Panc1 (cell line): ENCODE measurements at regions of chr12 and their contacts with region 1.

Region 1: DNA sequence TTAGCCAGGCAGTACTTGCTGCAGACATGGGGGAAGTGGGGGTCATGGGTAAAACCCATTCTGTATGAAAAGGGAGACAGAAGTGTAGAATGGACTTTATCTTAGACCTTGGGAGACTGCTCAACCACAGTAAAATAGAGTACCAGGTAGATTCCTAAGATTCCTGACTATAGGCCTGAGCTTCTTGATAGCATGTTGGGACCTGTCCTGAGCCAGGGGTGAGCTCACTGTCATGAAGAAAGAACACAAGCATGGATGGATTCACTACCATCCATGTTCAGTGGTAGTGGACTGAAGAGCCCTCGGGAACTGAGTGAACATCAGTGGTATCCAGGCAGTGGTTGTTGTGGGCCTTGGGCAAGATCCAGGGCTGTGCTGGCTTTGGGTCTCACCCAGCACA is 1003.8 kb downstream of the TMTC2 start:
- DNase-seq: no peak
- ATAC-seq: no peak
- H3K4me3 ChIP-seq: no peak overlapping the region
- H3K27ac ChIP-seq: no peak overlapping the region
- H3K4me1 ChIP-seq: no peaks in the 10 kb centered on the region
- H3K27me3 ChIP-seq: no peaks in the 10 kb centered on the region
- CTCF ChIP-seq: no peak

Region 2: GRCh38 chr12:83709899-83710298 is 19.4 kb after region 1 on chr12:
- CTCF ChIA-PET with region 1: no interaction called
- POLR2A ChIA-PET with region 1: no interaction called
- in situ Hi-C with region 1: no loop called
- intact Hi-C with region 1: no loop called
- DNase-seq: no peak
- ATAC-seq: no peak
- H3K4me3 ChIP-seq: no peak overlapping the region
- H3K27ac ChIP-seq: no peak overlapping the region
- H3K4me1 ChIP-seq: no peaks in the 10 kb centered on the region
- H3K27me3 ChIP-seq: no peaks in the 10 kb centered on the region
- CTCF ChIP-seq: no peak

Region 3: DNA sequence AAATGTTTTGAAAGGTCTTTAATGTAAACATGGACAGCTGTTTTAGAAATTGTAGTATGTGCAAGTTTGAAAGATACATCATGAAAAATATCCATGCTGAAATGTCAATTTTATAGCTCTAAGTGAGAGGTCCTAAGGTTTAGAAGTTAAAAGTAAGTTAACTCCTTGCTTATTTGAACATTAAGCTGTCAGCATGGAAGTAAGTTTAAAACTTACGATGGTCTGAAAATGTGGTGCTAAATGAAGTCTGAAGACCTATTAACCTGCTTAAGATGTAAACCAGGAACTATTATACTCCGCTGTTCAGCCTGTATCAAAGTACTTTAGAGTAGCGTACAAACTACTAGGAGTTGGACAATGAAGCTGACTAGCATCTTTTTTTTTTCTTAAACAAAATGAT is 78.7 kb after region 1 on chr12:
- CTCF ChIA-PET with region 1: no interaction called
- POLR2A ChIA-PET with region 1: interaction called, 10 read pairs
- in situ Hi-C with region 1: no loop called
- intact Hi-C with region 1: no loop called
- DNase-seq: no peak
- ATAC-seq: no peak
- H3K4me3 ChIP-seq: no peak overlapping the region
- H3K27ac ChIP-seq: no peak overlapping the region
- H3K4me1 ChIP-seq: no peaks in the 10 kb centered on the region
- H3K27me3 ChIP-seq: no peaks in the 10 kb centered on the region
- CTCF ChIP-seq: no peak

Region 4: DNA sequence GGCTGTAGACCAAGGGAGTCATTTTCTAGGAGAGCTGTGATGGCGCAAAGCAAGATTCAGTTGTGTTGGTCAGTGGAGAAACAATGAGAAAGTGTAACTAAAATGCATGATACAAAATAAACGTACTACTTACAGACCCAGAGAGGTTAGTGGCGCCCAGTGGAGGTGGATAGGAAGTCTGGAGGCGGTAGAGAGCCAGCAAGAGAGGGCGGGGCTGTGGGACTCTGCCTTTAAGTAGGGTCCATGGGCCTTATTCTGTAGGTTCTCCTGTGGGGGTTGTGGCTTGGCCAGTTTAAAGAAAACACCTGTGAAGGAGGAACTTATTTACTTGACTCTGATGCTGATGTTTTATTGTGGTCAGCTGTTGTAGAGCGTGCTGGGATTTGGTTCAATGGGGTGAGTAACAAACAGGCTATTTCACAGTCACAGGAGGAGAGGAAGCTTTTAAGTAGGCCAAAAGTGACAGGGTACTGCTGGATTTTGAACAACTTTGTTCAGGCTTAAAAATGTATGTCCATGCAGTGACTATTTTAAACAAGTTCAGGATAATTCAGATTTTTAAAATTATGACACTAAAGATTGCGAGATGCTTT is 93.9 kb after region 1 on chr12:
- CTCF ChIA-PET with region 1: no interaction called
- POLR2A ChIA-PET with region 1: no interaction called
- in situ Hi-C with region 1: no loop called
- intact Hi-C with region 1: no loop called
- DNase-seq: no peak
- ATAC-seq: no peak
- H3K4me3 ChIP-seq: no peak overlapping the region
- H3K27ac ChIP-seq: no peak overlapping the region
- H3K4me1 ChIP-seq: no peaks in the 10 kb centered on the region
- H3K27me3 ChIP-seq: no peaks in the 10 kb centered on the region
- CTCF ChIP-seq: no peak

Region 5: GRCh38 chr12:83865431-83865830 is 175.0 kb after region 1 on chr12:
- CTCF ChIA-PET with region 1: no interaction called
- POLR2A ChIA-PET with region 1: no interaction called
- in situ Hi-C with region 1: no loop called
- intact Hi-C with region 1: no loop called
- DNase-seq: no peak
- ATAC-seq: no peak
- H3K4me3 ChIP-seq: no peak overlapping the region
- H3K27ac ChIP-seq: no peak overlapping the region
- H3K4me1 ChIP-seq: no peaks in the 10 kb centered on the region
- H3K27me3 ChIP-seq: no peaks in the 10 kb centered on the region
- CTCF ChIP-seq: no peak